ENCODE measurements at regions of chr13 and their contacts with region 1.

Region 1: DNA sequence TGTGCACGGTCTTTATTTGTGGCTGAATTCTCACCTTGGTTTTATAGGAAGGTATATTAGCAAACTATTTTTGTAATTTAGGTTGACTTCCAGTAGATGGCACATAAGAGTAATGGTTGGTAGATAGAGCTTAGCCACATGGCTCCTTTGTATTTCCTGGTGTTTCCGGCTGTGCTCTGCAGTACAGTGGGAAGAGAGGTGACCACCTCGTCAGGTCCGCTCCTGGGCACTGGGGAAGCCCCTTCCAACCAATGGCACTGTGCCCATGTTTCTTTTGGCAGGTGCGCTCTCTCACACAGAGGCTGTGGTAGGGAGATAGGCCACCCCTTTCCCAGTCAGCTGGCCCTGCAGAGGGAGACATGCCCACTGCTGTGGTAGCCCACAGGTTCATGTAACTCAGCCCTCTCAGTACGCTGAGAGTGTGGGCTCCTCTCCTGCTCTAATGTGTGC is 74.3 kb upstream of the ATP12A start:
- DNase-seq: no peak
- H3K4me3 Mint-ChIP-seq: no peak overlapping the region
- H3K27ac Mint-ChIP-seq: peak overlapping the region; percentile 45
- H3K4me1 Mint-ChIP-seq: peaks cover 30% of the 10 kb centered on the region
- H3K27me3 Mint-ChIP-seq: no peaks in the 10 kb centered on the region

Region 2: GRCh38 chr13:24618014-24618955 is 12.3 kb after region 1 on chr13:
- CTCF ChIA-PET with region 1: interaction called, 14 read pairs
- POLR2A ChIA-PET with region 1: interaction called, 5 read pairs
- DNase-seq: peak; percentile 85
- H3K4me3 Mint-ChIP-seq: no peak overlapping the region
- H3K27ac Mint-ChIP-seq: peak overlapping the region; percentile 81
- H3K4me1 Mint-ChIP-seq: peaks cover 46% of the 10 kb centered on the region
- H3K27me3 Mint-ChIP-seq: no peaks in the 10 kb centered on the region

Region 3: DNA sequence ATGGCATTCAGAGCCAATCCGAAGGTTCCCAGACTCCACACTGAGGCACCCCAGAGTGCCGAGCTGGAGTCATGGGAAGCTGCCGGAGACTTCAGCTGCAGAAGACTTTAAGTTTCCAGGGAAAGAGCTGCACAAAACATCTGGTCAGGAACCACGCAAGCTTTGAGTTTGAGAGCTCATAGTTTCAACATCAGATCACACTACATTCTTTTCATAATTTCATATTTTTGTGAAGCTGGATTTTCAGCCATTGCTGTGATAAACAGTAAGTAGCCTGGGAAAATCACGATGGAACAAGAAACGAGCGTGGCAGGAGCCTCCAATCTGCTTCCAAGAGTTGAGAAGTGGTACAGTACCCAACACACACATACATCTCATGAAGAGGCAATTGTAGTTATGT is 48.8 kb after region 1 on chr13:
- CTCF ChIA-PET with region 1: no interaction called
- POLR2A ChIA-PET with region 1: no interaction called
- DNase-seq: no peak
- H3K4me3 Mint-ChIP-seq: no peak overlapping the region
- H3K27ac Mint-ChIP-seq: no peak overlapping the region
- H3K4me1 Mint-ChIP-seq: peaks cover 2% of the 10 kb centered on the region
- H3K27me3 Mint-ChIP-seq: peaks cover 13% of the 10 kb centered on the region

Region 4: GRCh38 chr13:24671386-24672107 is 65.6 kb after region 1 on chr13:
- CTCF ChIA-PET with region 1: interaction called, 20 read pairs
- POLR2A ChIA-PET with region 1: interaction called, 4 read pairs
- DNase-seq: no peak
- H3K4me3 Mint-ChIP-seq: no peak overlapping the region
- H3K27ac Mint-ChIP-seq: no peak overlapping the region
- H3K4me1 Mint-ChIP-seq: peaks cover 19% of the 10 kb centered on the region
- H3K27me3 Mint-ChIP-seq: peaks cover under 1% of the 10 kb centered on the region

Region 5: GRCh38 chr13:24683838-24684599 is 78.1 kb after region 1 on chr13:
- CTCF ChIA-PET with region 1: interaction called, 12 read pairs
- POLR2A ChIA-PET with region 1: no interaction called
- DNase-seq: peak; percentile 70
- H3K4me3 Mint-ChIP-seq: no peak overlapping the region
- H3K27ac Mint-ChIP-seq: peak overlapping the region; percentile 11
- H3K4me1 Mint-ChIP-seq: peaks cover 35% of the 10 kb centered on the region
- H3K27me3 Mint-ChIP-seq: peaks cover 34% of the 10 kb centered on the region

Region 6: DNA sequence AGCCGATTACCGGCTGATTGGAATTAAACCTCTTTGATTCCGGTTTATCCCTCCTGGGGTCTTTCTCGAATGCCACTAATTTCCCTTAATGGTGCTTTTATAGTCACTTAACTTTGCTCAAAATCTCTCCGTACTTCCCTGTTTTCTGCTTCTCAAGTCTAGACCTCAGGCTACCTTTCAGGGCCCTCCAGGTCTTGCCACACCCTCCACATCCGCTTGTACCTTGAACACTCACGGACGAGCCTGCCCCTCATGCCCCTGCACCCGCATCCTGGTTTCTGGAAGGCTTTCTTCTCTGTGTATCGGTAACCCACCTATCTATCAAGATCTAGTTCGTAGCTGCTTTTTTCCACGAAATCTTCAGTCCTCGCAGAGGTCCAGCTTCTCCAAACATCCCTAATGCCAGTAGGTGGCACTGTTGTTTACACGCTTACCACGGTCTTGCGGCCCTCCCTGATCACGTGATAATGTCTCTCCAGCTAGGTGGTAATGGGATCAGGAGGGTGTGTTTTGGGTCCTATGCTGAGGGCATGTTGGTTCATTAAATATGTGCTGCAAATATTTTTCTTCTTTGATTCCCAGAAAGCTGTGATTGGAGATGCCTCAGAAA is 88.0 kb after region 1 on chr13:
- CTCF ChIA-PET with region 1: interaction called, 14 read pairs
- POLR2A ChIA-PET with region 1: no interaction called
- DNase-seq: peak; percentile 60
- H3K4me3 Mint-ChIP-seq: peak overlapping the region; percentile 3
- H3K27ac Mint-ChIP-seq: no peak overlapping the region
- H3K4me1 Mint-ChIP-seq: peaks cover 18% of the 10 kb centered on the region
- H3K27me3 Mint-ChIP-seq: peaks cover 38% of the 10 kb centered on the region

Region 7: DNA sequence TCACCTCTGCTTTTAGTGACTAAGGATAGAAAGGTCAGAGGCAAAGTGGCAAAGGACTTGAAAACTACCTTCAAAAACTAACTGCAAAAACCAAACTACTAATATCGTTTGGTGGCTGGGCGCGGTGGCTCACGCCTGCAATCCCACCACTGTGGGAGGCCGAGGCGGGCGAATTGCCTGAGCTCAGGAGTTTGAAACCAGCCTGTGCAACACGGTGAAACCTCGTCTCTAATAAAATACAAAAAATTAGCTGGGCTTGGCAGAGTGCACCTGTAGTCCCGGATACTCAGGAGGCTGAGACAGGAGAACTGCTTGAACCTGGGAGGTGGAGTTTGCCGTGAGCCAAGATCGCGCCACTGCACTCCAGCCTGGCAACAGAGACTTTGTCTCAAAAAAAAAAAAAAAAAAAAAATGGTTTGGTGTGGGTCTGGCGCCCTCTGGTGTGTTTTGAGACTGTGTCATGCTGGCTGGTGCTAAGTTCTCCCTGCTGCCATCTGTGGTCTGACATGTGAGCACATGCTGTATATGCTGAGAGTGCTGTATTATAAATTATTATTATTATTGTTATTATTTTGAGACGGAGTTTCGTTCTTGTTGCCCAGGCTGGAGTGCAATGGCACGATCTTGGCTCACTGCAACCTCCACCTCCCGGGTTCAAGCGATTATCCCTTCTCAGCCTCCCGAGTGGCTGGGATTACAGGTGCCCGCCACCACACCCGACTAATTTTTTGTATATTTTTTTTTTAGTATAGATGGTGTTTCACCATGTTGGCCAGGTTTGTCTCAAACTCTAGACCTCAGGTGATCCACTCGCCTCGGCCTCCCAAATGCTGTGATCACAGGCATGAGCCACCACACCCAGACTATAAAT is 122.0 kb after region 1 on chr13:
- CTCF ChIA-PET with region 1: interaction called, 20 read pairs
- POLR2A ChIA-PET with region 1: no interaction called
- DNase-seq: peak; percentile 74
- H3K4me3 Mint-ChIP-seq: no peak overlapping the region
- H3K27ac Mint-ChIP-seq: no peak overlapping the region
- H3K4me1 Mint-ChIP-seq: peaks cover 15% of the 10 kb centered on the region
- H3K27me3 Mint-ChIP-seq: peaks cover 22% of the 10 kb centered on the region

Region 8: GRCh38 chr13:24822640-24823039 is 216.7 kb after region 1 on chr13:
- CTCF ChIA-PET with region 1: no interaction called
- POLR2A ChIA-PET with region 1: no interaction called
- DNase-seq: no peak
- H3K4me3 Mint-ChIP-seq: no peak overlapping the region
- H3K27ac Mint-ChIP-seq: no peak overlapping the region
- H3K4me1 Mint-ChIP-seq: peaks cover 6% of the 10 kb centered on the region
- H3K27me3 Mint-ChIP-seq: peaks cover 12% of the 10 kb centered on the region

Measured in activated CD4-positive, alpha-beta memory T cell treated with anti-CD3 and anti-CD28 coated beads, Interleukin-2, amount 10 ng/mL, durations not matched to agents 7 days and 5 days (primary cell).